ENCODE measurements at regions of chr7 and their contacts with region 1.

Region 1: GRCh38 chr7:95686109-95686508 is 86.2 kb upstream of the DYNC1I1 start:
- DNase-seq: no peak
- CTCF ChIP-seq: no peak

Region 2: DNA sequence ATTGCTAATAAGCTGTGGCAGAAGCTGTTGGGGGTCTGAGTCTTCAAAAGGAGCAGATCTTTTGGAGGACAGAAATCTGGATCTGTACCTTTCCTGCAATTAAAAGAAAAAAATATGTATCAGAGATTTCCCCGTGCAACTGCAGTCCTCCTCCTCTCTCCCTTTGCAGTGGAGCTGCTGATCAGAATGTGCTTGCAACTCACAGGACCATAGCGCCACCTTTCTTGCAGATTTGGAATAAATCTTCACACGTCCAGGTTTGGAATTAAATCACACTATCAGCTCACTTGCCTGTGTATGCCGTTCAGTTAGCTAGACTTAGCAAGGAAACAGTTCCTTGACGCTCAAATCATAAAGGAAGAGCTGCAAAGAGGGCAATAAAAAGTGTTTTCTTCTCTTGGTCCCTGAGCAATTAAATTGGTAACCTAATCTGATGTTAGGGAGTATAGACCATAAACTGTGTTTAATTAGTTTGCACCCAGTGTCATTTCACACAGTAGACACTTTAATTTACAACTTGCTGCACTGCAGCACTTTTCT is 439.2 kb before region 1 on chr7:
- in situ Hi-C with region 1: no loop called
- DNase-seq: peak; percentile 17
- CTCF ChIP-seq: peak; percentile 67

Region 3: DNA sequence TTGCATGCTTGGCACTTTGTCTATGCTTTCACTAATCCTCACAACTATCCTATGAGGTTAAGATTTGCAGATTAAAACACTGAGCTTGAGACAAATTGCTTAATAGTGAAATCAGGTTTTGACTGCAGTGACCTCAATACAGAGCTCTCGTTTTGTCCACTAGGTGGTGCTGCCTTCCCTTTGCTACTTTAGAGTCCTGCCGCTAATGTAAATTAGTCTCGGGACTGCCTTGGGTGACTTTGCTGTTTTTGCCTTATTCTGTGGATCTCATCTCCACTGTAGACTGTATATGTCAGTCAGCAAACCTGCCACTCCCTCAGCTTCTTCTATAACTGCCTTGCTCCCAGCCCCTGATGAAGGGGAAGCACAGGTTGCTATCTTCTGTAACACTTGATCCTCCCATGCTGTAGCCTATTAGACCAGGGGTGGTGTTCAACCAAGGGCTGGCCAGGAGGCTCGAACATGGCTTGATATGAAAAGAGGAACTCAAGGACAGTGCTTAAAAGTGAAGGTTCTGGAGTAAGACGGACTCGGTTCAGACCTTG is 174.3 kb before region 1 on chr7:
- in situ Hi-C with region 1: loop called (anchors 10 kb)
- DNase-seq: peak; percentile 32
- CTCF ChIP-seq: peak; percentile 79

Region 4: DNA sequence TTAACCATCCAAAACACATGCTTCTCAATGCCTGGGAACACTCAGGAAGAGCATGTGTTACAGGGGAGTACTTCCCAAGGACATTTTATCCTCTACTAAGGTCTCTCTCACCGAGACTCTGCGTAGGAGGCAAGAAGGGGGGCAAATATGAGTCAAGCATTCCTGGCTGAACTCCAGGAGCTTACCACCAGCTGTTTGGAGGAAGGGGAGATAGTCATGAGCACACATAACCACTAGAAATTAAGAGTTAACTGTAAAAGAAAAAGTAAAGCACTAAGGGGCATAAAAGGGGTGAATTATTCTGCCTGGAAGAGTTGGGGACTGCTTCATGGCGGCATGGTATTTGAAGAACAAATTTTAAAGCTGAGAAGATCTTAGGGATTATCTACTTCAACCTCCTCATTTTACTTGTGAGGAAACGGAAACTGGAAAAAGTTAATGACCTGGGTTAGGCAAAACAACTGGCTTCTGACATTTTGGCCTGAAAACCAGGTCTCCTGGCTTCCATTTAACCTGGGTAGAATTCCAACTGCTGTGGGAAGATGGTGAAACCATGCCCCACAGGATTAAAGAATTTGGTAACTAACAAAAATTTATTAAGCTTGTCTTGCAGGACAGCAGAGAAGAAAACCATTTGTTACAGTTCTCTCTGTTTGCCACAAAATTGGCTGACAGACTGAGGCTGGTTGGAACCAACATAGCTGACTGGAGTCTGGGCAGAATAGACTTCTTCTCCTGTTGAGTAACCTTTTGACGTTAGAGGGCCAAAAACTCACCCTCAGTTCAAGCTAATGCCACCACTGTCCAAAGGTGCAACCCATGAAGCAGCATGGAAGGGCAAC is 550.3 kb after region 1 on chr7:
- in situ Hi-C with region 1: no loop called
- DNase-seq: no peak
- CTCF ChIP-seq: no peak